ENCODE measurements at regions of chr1 and their contacts with region 1.

Region 1: DNA sequence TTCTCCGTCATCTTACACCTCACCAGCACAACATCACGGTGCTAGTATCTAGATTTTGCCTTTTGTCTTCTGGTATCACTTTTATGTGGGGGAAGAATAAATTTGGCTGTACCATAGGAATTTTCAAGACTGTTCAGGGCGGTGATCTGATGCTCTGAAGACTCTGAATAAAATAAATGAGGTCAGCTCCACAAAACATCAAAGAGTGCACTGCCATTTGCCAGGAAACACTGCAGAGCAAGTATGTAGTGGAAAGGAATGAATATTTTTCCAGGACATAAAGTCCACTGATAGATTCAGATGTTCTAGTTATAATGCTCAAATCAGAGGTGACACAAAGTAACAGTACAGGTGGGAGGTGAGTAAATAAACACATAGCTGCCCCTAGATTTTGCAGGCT is 56.3 kb downstream of the ZP4 start:
- DNase-seq: no peak
- H3K4me3 ChIP-seq: no peak overlapping the region
- H3K27ac ChIP-seq: peak overlapping the region in 1 of 2 experiments; percentile 22; a peak in 1 of 4 replicates
- H3K4me1 ChIP-seq: peaks cover 0 to 12% of the 10 kb centered on the region in 2 experiments; a peak in 2 of 4 replicates
- H3K27me3 ChIP-seq: no peaks in the 10 kb centered on the region
- CTCF ChIP-seq: no peak
- EP300 ChIP-seq: no peak
- RAD21 ChIP-seq: no peak

Region 2: DNA sequence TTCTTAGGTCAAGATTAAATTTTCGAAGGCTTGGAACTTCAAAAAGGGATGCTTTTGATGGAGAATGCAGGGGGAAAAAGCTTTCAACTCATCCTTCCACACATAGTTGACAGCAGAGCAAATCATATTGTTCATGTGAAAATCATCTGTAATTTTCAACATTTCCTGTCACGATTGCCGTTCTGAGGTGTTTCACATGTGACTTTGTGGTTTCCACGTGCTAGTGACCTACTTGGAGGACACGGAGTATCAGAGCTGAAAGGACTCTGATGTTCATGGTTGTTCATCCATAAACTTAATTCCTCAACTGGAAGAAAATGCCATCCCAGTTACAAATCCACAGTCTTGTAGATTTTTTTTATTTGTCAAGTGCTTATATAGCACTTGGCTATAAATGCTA is 22.8 kb before region 1 on chr1:
- CTCF ChIA-PET with region 1: interaction called, 10 read pairs
- POLR2A ChIA-PET with region 1: no interaction called
- DNase-seq: no peak
- H3K4me3 ChIP-seq: no peak overlapping the region
- H3K27ac ChIP-seq: no peak overlapping the region
- H3K4me1 ChIP-seq: no peaks in the 10 kb centered on the region; a peak in 1 of 4 replicates
- H3K27me3 ChIP-seq: no peaks in the 10 kb centered on the region
- CTCF ChIP-seq: no peak
- EP300 ChIP-seq: no peak
- RAD21 ChIP-seq: no peak

Region 3: GRCh38 chr1:237851210-237851845 is 16.9 kb after region 1 on chr1:
- CTCF ChIA-PET with region 1: interaction called, 33 read pairs
- POLR2A ChIA-PET with region 1: no interaction called
- DNase-seq: peak; percentile 50
- H3K4me3 ChIP-seq: no peak overlapping the region; a peak in 1 of 4 replicates
- H3K27ac ChIP-seq: no peak overlapping the region
- H3K4me1 ChIP-seq: no peaks in the 10 kb centered on the region; a peak in 2 of 4 replicates
- H3K27me3 ChIP-seq: no peaks in the 10 kb centered on the region
- CTCF ChIP-seq: peak; percentile 82
- EP300 ChIP-seq: no peak
- RAD21 ChIP-seq: peak; percentile 80

Region 4: DNA sequence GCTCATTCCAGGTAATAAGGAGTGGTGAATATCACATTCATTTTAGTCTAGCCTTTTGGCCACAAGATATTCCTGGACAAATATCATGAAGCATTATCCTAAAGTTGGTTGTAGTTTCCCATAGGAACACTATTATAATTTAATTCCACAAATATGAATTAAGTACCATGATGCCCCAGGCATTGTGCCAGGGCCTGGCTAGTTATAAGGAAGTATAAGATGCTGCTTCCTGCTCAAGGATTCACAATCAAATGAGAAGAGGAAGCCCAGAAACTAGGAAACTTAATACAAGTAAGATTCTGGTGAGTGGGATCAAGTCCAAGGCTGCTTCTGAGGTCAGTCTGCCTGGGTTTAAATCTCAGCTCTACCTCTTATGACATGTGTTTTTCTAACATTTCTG is 86.8 kb after region 1 on chr1:
- CTCF ChIA-PET with region 1: no interaction called
- POLR2A ChIA-PET with region 1: no interaction called
- DNase-seq: no peak
- H3K4me3 ChIP-seq: no peak overlapping the region
- H3K27ac ChIP-seq: no peak overlapping the region
- H3K4me1 ChIP-seq: no peaks in the 10 kb centered on the region; a peak in 1 of 4 replicates
- H3K27me3 ChIP-seq: no peaks in the 10 kb centered on the region
- CTCF ChIP-seq: no peak
- EP300 ChIP-seq: no peak
- RAD21 ChIP-seq: no peak